Activated B cell treated with CpG ODN at 0.5 μM for 24 hours (primary cell): ENCODE measurements at regions of chr20 and their contacts with region 1.

Region 1: GRCh38 chr20:37316116-37316774 is 26.8 kb downstream of the MANBAL start:
- DNase-seq: peak; percentile 62
- ATAC-seq: peak; percentile 90
- H3K4me3 Mint-ChIP-seq: peak overlapping the region; percentile 59
- H3K27ac Mint-ChIP-seq: peak overlapping the region; percentile 92
- H3K4me1 Mint-ChIP-seq: peaks cover 56% of the 10 kb centered on the region
- H3K27me3 Mint-ChIP-seq: no peaks in the 10 kb centered on the region
- CTCF ChIP-seq: no peak

Region 2: GRCh38 chr20:36666181-36666740 is 650.0 kb before region 1 on chr20:
- CTCF ChIA-PET with region 1: no interaction called
- POLR2A ChIA-PET with region 1: no interaction called
- intact Hi-C with region 1: no loop called
- DNase-seq: no peak
- ATAC-seq: no peak
- H3K4me3 Mint-ChIP-seq: no peak overlapping the region
- H3K27ac Mint-ChIP-seq: no peak overlapping the region
- H3K4me1 Mint-ChIP-seq: no peaks in the 10 kb centered on the region
- H3K27me3 Mint-ChIP-seq: no peaks in the 10 kb centered on the region
- CTCF ChIP-seq: no peak

Region 3: GRCh38 chr20:37226889-37227288 is 89.4 kb before region 1 on chr20:
- CTCF ChIA-PET with region 1: no interaction called
- POLR2A ChIA-PET with region 1: no interaction called
- intact Hi-C with region 1: no loop called
- DNase-seq: no peak
- ATAC-seq: no peak
- H3K4me3 Mint-ChIP-seq: no peak overlapping the region
- H3K27ac Mint-ChIP-seq: no peak overlapping the region
- H3K4me1 Mint-ChIP-seq: peaks cover 4% of the 10 kb centered on the region
- H3K27me3 Mint-ChIP-seq: no peaks in the 10 kb centered on the region
- CTCF ChIP-seq: no peak

Region 4: DNA sequence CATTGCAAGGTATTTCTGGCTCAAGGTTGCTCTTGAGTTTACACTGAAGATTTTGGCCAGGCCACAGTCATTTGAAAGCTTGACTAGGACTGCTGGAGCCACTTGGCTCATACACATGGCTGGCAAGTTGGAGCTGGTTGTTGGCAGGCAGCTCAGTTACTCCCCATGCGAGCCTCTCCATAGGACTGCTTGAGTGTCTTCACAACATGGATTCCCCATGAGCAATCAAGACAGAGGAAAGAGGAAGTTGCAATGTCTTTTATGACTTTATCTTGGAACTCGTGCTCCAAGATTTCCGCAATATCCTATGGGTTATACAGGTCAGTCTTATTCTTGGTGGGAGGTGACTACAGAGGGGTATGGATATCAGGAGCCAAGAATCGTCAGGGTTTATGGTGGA is 28.2 kb before region 1 on chr20:
- CTCF ChIA-PET with region 1: no interaction called
- POLR2A ChIA-PET with region 1: interaction called, 27 read pairs
- intact Hi-C with region 1: loop called (anchors 1 kb)
- DNase-seq: no peak
- ATAC-seq: no peak
- H3K4me3 Mint-ChIP-seq: no peak overlapping the region
- H3K27ac Mint-ChIP-seq: no peak overlapping the region
- H3K4me1 Mint-ChIP-seq: peaks cover 35% of the 10 kb centered on the region
- H3K27me3 Mint-ChIP-seq: no peaks in the 10 kb centered on the region
- CTCF ChIP-seq: no peak

Region 5: GRCh38 chr20:37294262-37294981 is 21.8 kb before region 1 on chr20:
- CTCF ChIA-PET with region 1: no interaction called
- POLR2A ChIA-PET with region 1: interaction called, 27 read pairs
- intact Hi-C with region 1: loop called (anchors 1 kb)
- DNase-seq: no peak
- ATAC-seq: no peak
- H3K4me3 Mint-ChIP-seq: no peak overlapping the region
- H3K27ac Mint-ChIP-seq: peak overlapping the region; percentile 15
- H3K4me1 Mint-ChIP-seq: peaks cover 62% of the 10 kb centered on the region
- H3K27me3 Mint-ChIP-seq: no peaks in the 10 kb centered on the region
- CTCF ChIP-seq: no peak

Region 6: GRCh38 chr20:37345339-37346230 is 29.3 kb after region 1 on chr20 and contains the start of gene SRC:
- CTCF ChIA-PET with region 1: no interaction called
- POLR2A ChIA-PET with region 1: interaction called, 4 read pairs
- intact Hi-C with region 1: loop called (anchors 5 kb)
- DNase-seq: peak; percentile 56
- ATAC-seq: peak; percentile 65
- H3K4me3 Mint-ChIP-seq: peak within 1 kb of the TSS; percentile 84
- H3K27ac Mint-ChIP-seq: peak within 1 kb of the TSS; percentile 80
- H3K4me1 Mint-ChIP-seq: peaks cover 54% of the 10 kb centered on the region
- H3K27me3 Mint-ChIP-seq: no peaks in the 10 kb centered on the region
- CTCF ChIP-seq: no peak
- total RNA-seq, gene SRC: 62.9 and 72.7 TPM in 2 replicates